AG04450 (cell line): ENCODE measurements at regions of chr4 and their contacts with region 1.

Region 1: GRCh38 chr4:109631532-109632108 is 71.6 kb downstream of the MCUB start:
- DNase-seq: no peak
- H3K4me3 ChIP-seq: no peak overlapping the region
- H3K27ac ChIP-seq: no peak overlapping the region
- H3K27me3 ChIP-seq: no peaks in the 10 kb centered on the region
- CTCF ChIP-seq: no peak

Region 2: GRCh38 chr4:109648266-109648996 is 16.8 kb after region 1 on chr4:
- CTCF ChIA-PET with region 1: interaction called, 12 read pairs
- POLR2A ChIA-PET with region 1: no interaction called
- DNase-seq: no peak
- H3K4me3 ChIP-seq: no peak overlapping the region
- H3K27ac ChIP-seq: no peak overlapping the region
- H3K27me3 ChIP-seq: no peaks in the 10 kb centered on the region
- CTCF ChIP-seq: no peak